Cardiac septum (tissue), 1 donor: ENCODE measurements at regions of chr7 and their contacts with region 1.

Region 1: DNA sequence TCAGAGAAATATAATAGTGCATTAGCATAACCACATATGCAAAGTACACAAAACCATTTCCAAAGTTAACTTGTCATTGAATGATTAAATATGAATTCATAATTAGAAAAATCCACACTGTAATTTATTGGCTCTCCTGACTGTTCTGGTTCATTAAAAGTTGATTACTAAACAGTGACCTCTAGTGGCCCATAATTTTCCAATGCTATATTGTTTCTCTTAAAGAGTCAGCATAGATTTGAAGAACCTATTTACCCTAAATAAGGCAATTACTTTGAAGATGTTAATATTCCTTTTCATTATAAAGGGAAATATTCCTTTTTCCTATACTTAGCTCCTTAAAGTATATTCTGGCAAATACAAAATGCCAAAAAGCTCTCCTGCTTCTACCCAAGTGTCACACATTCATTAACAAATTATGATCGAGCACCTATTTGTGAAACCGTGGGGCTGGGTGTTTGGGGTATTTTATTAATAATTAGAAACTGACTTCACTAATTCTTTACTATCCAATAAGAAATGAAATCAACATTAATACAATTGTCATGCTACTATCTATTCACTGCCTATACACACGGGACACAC is 86.2 kb downstream of the HIBADH start:
- DNase-seq: no peak

Region 2: GRCh38 chr7:27210441-27211083 is 365.9 kb before region 1 on chr7:
- intact Hi-C with region 1: loop called (anchors 5 kb)
- DNase-seq: peak; percentile 73

Region 3: GRCh38 chr7:27339478-27339877 is 237.0 kb before region 1 on chr7:
- intact Hi-C with region 1: no loop called
- DNase-seq: no peak

Region 4: DNA sequence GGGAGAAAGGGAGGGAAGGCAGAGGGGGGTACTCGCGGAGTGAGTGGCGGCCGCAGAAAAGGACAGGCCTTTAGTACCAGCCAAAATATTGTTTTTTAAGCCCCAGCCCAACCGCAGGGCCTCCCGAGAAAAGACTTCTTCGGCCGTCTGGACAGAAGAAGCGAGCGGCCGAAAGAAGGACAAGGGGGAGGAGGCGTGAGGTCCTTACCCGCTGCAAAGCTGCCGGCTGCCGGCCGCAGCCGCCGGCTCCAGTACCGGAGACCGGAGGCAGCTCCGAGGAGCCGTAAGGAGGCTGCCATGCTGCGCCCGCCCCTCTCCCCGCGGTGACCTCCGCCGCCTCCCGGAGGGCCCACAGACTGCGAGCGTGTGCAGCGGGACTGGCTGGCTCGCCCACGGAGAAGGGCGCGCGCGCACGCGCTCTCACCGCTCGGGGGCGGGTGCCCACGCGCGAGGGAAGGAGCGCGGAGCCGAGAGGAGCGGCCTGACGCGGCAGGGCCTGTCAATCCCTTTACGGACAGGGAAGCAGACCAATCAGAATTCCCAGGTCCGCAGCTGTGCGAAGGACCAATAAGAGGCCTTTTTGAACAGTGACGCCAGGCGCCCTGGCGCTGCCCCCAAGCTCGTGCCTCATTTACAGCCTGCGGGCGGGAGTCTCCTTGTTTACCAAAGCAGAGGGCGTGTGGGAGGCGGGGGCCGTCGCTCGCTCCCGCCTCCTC is 86.2 kb after region 1 on chr7 and contains the start of gene HIBADH:
- intact Hi-C with region 1: no loop called
- DNase-seq: peak; percentile 99
- total RNA-seq, gene HIBADH: 54.8 TPM